Panc1 (cell line): ENCODE measurements at regions of chr11 and their contacts with region 1.

Region 1: GRCh38 chr11:71501071-71501887 is 25.8 kb upstream of the KRTAP5-7 start:
- DNase-seq: no peak
- ATAC-seq: no peak
- H3K4me3 ChIP-seq: no peak overlapping the region
- H3K27ac ChIP-seq: no peak overlapping the region
- H3K4me1 ChIP-seq: no peaks in the 10 kb centered on the region
- H3K27me3 ChIP-seq: no peaks in the 10 kb centered on the region
- CTCF ChIP-seq: no peak

Region 2: GRCh38 chr11:71490781-71491361 is 10.4 kb before region 1 on chr11:
- CTCF ChIA-PET with region 1: no interaction called
- POLR2A ChIA-PET with region 1: interaction called, 16 read pairs
- in situ Hi-C with region 1: no loop called
- intact Hi-C with region 1: no loop called
- DNase-seq: no peak
- ATAC-seq: no peak
- H3K4me3 ChIP-seq: no peak overlapping the region
- H3K27ac ChIP-seq: no peak overlapping the region
- H3K4me1 ChIP-seq: peaks cover 10% of the 10 kb centered on the region; the same call in 1 of the 2 replicates
- H3K27me3 ChIP-seq: no peaks in the 10 kb centered on the region
- CTCF ChIP-seq: no peak